IMR-90 (cell line): ENCODE measurements at regions of chr3 and their contacts with region 1.

Region 1: GRCh38 chr3:161430307-161430706 is 59.0 kb upstream of the SPTSSB start:
- DNase-seq: no peak
- ATAC-seq: no peak
- H3K4me3 ChIP-seq: no peak overlapping the region
- H3K27ac ChIP-seq: no peak overlapping the region
- H3K4me1 ChIP-seq: no peaks in the 10 kb centered on the region
- H3K27me3 ChIP-seq: no peaks in the 10 kb centered on the region
- CTCF ChIP-seq: no peak
- POLR2A ChIP-seq: no peak
- RAD21 ChIP-seq: no peak

Region 2: DNA sequence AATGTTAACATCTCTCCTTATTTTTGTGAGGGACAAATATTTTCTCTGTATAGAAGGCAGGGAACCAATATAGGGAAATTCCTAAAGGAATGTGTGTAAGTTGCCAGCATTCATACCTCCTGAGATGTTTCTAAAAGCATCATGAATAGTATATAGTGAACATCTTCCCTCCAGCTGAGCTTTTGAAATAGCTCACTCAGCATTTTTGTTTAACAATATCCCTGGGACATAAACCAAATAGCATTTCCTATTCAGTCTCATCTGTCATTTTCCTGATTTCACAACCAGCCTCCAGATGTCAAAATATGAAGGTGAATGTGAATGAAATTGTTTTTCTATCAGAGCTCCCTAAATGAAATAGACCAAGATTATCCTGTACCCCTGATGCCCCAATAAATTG is 537.1 kb before region 1 on chr3:
- CTCF ChIA-PET with region 1: interaction called, 10 read pairs
- POLR2A ChIA-PET with region 1: no interaction called
- dilution Hi-C with region 1: no loop called
- in situ Hi-C with region 1: no loop called
- intact Hi-C with region 1: no loop called
- DNase-seq: no peak
- ATAC-seq: no peak
- H3K4me3 ChIP-seq: no peak overlapping the region
- H3K27ac ChIP-seq: no peak overlapping the region
- H3K4me1 ChIP-seq: no peaks in the 10 kb centered on the region
- H3K27me3 ChIP-seq: no peaks in the 10 kb centered on the region
- CTCF ChIP-seq: no peak
- POLR2A ChIP-seq: no peak
- RAD21 ChIP-seq: no peak

Region 3: GRCh38 chr3:161754420-161755053 is 324.2 kb after region 1 on chr3:
- CTCF ChIA-PET with region 1: no interaction called
- POLR2A ChIA-PET with region 1: no interaction called
- dilution Hi-C with region 1: no loop called
- in situ Hi-C with region 1: no loop called
- intact Hi-C with region 1: no loop called
- DNase-seq: no peak
- ATAC-seq: no peak
- H3K4me3 ChIP-seq: no peak overlapping the region
- H3K27ac ChIP-seq: no peak overlapping the region
- H3K4me1 ChIP-seq: no peaks in the 10 kb centered on the region
- H3K27me3 ChIP-seq: no peaks in the 10 kb centered on the region
- CTCF ChIP-seq: no peak
- POLR2A ChIP-seq: no peak
- RAD21 ChIP-seq: no peak